Activated CD4-positive, alpha-beta T cell treated with anti-CD3 and anti-CD28 coated beads, Interleukin-2, amount 10 ng/mL, durations not matched to agents 24 days and 14 days (primary cell): ENCODE measurements at regions of chr3 and their contacts with region 1.

Region 1: GRCh38 chr3:42090973-42091731 is at the start of gene TRAK1:
- DNase-seq: no peak
- H3K4me3 Mint-ChIP-seq: peak within 1 kb of the TSS; percentile 43
- H3K27ac Mint-ChIP-seq: peak within 1 kb of the TSS; percentile 74
- H3K4me1 Mint-ChIP-seq: peaks cover 37% of the 10 kb centered on the region
- H3K27me3 Mint-ChIP-seq: no peaks in the 10 kb centered on the region
- total RNA-seq, gene TRAK1: 35.4 and 35.9 TPM in 2 replicates

Region 2: GRCh38 chr3:40317061-40317855 is 1773.9 kb before region 1 on chr3:
- intact Hi-C with region 1: loop called (anchors 10 kb)
- DNase-seq: peak; percentile 83
- H3K4me3 Mint-ChIP-seq: no peak overlapping the region
- H3K27ac Mint-ChIP-seq: no peak overlapping the region
- H3K4me1 Mint-ChIP-seq: peaks cover 4% of the 10 kb centered on the region
- H3K27me3 Mint-ChIP-seq: peaks cover 6% of the 10 kb centered on the region

Region 3: DNA sequence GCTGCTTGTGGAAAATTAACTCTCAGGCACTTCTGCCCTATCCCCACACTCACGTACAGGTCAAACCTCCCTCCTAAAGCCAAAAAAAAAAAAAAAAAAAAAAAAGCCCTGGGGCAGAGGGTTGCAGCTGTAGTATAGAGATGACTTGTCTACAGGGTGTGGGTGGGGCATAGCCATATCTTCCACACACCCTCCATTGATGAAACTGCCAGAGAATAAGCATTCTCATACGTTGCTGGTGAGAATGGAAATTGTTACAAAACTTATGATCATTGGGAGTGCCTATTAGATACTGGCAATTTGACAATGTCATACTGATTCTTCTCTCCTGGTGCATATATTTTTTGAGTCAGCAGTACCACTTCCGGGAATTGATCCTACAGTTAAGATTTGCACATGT is 902.9 kb before region 1 on chr3:
- intact Hi-C with region 1: loop called (anchors 2 kb)
- DNase-seq: peak; percentile 59
- H3K4me3 Mint-ChIP-seq: no peak overlapping the region
- H3K27ac Mint-ChIP-seq: peak overlapping the region; percentile 69
- H3K4me1 Mint-ChIP-seq: peaks cover 23% of the 10 kb centered on the region
- H3K27me3 Mint-ChIP-seq: peaks cover 15% of the 10 kb centered on the region

Region 4: GRCh38 chr3:41961750-41962679 is 129.1 kb before region 1 on chr3 and contains the start of gene ULK4:
- intact Hi-C with region 1: loop called (anchors 1 kb)
- DNase-seq: peak; percentile 98
- H3K4me3 Mint-ChIP-seq: peak within 1 kb of the TSS; percentile 92
- H3K27ac Mint-ChIP-seq: peak within 1 kb of the TSS; percentile 94
- H3K4me1 Mint-ChIP-seq: peaks cover 9% of the 10 kb centered on the region
- H3K27me3 Mint-ChIP-seq: peaks cover 1% of the 10 kb centered on the region
- total RNA-seq, gene ULK4: 6.3 and 10.2 TPM in 2 replicates

Region 5: DNA sequence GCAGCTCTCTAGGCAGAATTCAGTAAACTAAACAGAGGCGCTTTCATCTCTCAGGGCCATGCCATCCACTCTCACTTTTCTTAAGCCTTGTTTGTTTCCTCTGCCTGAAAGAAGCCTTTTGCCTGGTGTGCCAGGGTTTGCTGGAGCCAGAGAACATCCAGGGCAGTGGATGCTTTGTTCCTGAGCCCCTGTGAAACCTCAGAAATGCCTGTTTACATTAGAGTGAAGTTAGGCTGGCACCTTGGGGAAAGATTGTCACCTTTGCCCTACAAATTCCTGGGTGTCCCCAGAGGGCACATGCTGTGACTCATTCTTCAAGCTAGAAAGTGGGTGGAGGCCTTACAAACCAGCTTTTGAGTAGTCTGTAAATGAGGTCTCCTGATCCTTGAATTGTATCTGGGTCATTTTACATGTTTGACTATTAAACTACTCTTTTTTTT is 10.7 kb before region 1 on chr3:
- intact Hi-C with region 1: loop called (anchors 1 kb)
- DNase-seq: no peak
- H3K4me3 Mint-ChIP-seq: peak overlapping the region; percentile 26
- H3K27ac Mint-ChIP-seq: peak overlapping the region; percentile 84
- H3K4me1 Mint-ChIP-seq: peaks cover 37% of the 10 kb centered on the region
- H3K27me3 Mint-ChIP-seq: no peaks in the 10 kb centered on the region